ENCODE measurements at regions of chr13 and their contacts with region 1.

Region 1: GRCh38 chr13:60765700-60766411 is 368.8 kb downstream of the TDRD3 start:
- DNase-seq: no peak
- H3K4me3 ChIP-seq: no peak overlapping the region
- H3K27ac ChIP-seq: no peak overlapping the region
- H3K4me1 ChIP-seq: peaks cover 0 to 11% (median 7%) of the 10 kb centered on the region in 4 donors
- H3K27me3 ChIP-seq: no peaks in the 10 kb centered on the region
- CTCF ChIP-seq: no peak

Region 2: GRCh38 chr13:60431108-60431700 is 334.7 kb before region 1 on chr13:
- intact Hi-C with region 1: no loop called
- DNase-seq: no peak
- H3K4me3 ChIP-seq: no peak overlapping the region
- H3K27ac ChIP-seq: no peak overlapping the region
- H3K4me1 ChIP-seq: peaks cover 0 to 5% (median 0%) of the 10 kb centered on the region in 4 donors
- H3K27me3 ChIP-seq: no peaks in the 10 kb centered on the region
- CTCF ChIP-seq: peak; percentile 87 to 93

Region 3: GRCh38 chr13:60881507-60881906 is 115.7 kb after region 1 on chr13:
- intact Hi-C with region 1: loop called (anchors 2 kb)
- DNase-seq: no peak
- H3K4me3 ChIP-seq: no peak overlapping the region
- H3K27ac ChIP-seq: no peak overlapping the region
- H3K4me1 ChIP-seq: no peaks in the 10 kb centered on the region
- H3K27me3 ChIP-seq: no peaks in the 10 kb centered on the region
- CTCF ChIP-seq: no peak